ENCODE measurements at regions of chr9 and their contacts with region 1.

Region 1: DNA sequence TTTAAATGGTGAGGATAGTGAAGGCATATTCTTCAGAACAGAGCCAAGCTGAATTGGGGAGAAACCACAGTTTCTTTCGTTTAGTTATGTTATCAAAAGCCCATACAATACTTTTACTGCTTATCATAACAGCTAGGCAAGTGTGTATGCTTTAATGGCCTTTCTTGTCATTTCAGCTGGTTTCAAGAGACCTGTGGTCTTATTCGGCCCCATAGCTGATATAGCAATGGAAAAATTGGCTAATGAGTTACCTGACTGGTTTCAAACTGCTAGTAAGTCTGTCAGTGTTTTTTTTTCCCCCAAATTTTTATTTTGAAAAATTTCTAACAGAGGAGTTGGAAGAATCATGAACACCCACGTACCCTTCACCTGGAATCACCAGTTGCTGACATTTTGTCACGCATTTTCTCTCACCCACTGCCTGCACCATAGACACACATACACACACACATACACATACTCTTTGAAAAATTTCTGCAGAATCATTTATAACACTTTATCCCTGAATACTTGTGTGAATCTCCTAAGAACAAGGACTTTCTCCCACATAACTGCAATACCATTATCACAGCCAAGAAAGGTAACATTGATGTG is 63.7 kb downstream of the TJP2 start:
- DNase-seq: no peak
- H3K4me3 Mint-ChIP-seq: no peak overlapping the region
- H3K27ac Mint-ChIP-seq: no peak overlapping the region
- H3K4me1 Mint-ChIP-seq: no peaks in the 10 kb centered on the region
- H3K27me3 Mint-ChIP-seq: no peaks in the 10 kb centered on the region
- CTCF ChIP-seq: no peak

Region 2: DNA sequence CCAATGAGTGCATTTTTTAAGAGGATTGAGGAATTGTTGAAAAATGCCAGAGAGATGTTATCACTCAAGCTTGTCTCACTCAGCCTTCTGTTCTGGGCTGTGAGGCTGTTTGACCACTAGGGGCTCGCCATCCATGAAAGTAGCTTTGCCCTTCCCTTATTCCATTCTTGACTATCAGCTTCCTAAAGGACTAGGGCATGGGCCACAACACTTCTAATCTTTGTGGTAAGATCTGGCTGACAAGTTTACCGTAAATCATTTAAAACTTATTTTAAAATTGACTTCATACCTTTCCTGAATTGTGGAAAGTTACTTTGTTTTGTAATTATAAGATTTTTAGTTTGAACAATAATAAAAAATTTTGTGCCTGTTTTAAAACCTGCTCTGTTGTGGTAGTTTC is 14.2 kb before region 1 on chr9:
- CTCF ChIA-PET with region 1: interaction called, 10 read pairs
- intact Hi-C with region 1: no loop called
- DNase-seq: peak; percentile 48
- H3K4me3 Mint-ChIP-seq: no peak overlapping the region
- H3K27ac Mint-ChIP-seq: no peak overlapping the region
- H3K4me1 Mint-ChIP-seq: no peaks in the 10 kb centered on the region
- H3K27me3 Mint-ChIP-seq: no peaks in the 10 kb centered on the region
- CTCF ChIP-seq: peak; percentile 73

Region 3: GRCh38 chr9:69502671-69503301 is 265.0 kb after region 1 on chr9:
- CTCF ChIA-PET with region 1: no interaction called
- intact Hi-C with region 1: no loop called
- DNase-seq: no peak
- H3K4me3 Mint-ChIP-seq: no peak overlapping the region
- H3K27ac Mint-ChIP-seq: peak overlapping the region; percentile 70
- H3K4me1 Mint-ChIP-seq: peaks cover 24% of the 10 kb centered on the region
- H3K27me3 Mint-ChIP-seq: no peaks in the 10 kb centered on the region
- CTCF ChIP-seq: no peak